ENCODE measurements at regions of chr2 and their contacts with region 1.

Region 1: DNA sequence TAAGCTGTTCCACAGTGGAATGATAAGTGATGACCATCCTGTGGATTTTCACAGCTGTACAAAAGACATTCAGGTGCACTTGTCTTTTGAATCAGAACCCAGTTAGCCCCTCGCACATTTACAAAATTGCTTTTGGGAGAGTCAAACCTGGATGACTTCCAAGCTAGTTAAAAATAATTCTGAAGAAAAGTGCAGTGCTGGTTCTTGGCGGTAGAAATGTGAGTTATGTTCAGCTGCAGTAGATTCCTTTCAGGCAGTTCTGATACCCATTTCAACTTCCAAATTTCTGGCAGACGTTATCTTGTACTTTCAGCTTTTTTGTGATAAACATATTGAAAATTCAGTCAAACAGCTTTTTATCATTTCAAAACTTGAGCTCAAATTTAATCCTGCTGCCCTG is 324.7 kb downstream of the NRXN1 start:
- DNase-seq: no peak

Region 2: GRCh38 chr2:50492477-50492851 is 214.7 kb before region 1 on chr2:
- intact Hi-C with region 1: no loop called
- DNase-seq: no peak

Region 3: GRCh38 chr2:50691513-50691912 is 15.7 kb before region 1 on chr2:
- intact Hi-C with region 1: loop called in 1 of 2 experiments (anchors 1 kb)
- DNase-seq: no peak

Region 4: GRCh38 chr2:50746526-50746925 is 39.3 kb after region 1 on chr2:
- intact Hi-C with region 1: no loop called
- DNase-seq: no peak

Measured in posterior vena cava (tissue), 2 donors.